ENCODE measurements at regions of chr3 and their contacts with region 1.

Region 1: GRCh38 chr3:148379763-148380382 is 317.8 kb upstream of the AGTR1 start:
- DNase-seq: peak in 1 of 2 experiments; percentile 53
- H3K4me3 ChIP-seq: no peak overlapping the region
- H3K4me3 Mint-ChIP-seq: no peak overlapping the region
- H3K27ac Mint-ChIP-seq: no peak overlapping the region
- H3K4me1 ChIP-seq: no peaks in the 10 kb centered on the region
- H3K4me1 Mint-ChIP-seq: no peaks in the 10 kb centered on the region
- H3K27me3 ChIP-seq: no peaks in the 10 kb centered on the region
- H3K27me3 Mint-ChIP-seq: no peaks in the 10 kb centered on the region
- CTCF ChIP-seq: peak; percentile 57 to 58

Region 2: DNA sequence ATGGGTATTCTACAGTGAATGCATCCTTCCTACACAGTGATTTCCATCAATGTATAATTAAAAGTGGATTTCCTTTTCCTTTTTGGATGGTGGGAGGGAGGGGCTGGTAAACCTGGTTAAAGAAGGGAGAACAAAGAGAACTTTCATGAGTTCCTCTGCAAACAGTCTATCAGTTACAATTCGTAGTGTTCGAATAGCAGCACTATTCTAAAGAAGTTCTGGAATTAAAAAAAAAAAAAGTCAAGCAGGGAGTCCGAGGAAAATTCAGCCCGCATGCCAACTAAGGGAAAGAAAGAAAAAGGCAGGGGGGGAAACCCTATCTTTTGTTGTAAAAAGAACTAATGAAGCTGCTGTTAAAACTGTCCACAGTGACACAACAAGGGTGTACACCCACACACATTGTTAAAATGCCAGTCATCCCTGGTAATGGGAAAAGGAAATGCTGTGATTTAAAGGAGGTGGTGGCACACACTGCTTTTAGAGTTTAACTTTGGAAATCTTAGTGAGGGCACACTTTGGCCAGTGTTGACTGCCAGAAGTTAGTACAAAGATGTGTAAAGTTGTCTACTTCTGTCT is 449.6 kb before region 1 on chr3:
- CTCF ChIA-PET with region 1: no interaction called
- POLR2A ChIA-PET with region 1: no interaction called
- intact Hi-C with region 1: no loop called
- DNase-seq: no peak
- H3K4me3 ChIP-seq: no peak overlapping the region
- H3K4me3 Mint-ChIP-seq: no peak overlapping the region
- H3K27ac Mint-ChIP-seq: no peak overlapping the region
- H3K4me1 ChIP-seq: no peaks in the 10 kb centered on the region
- H3K4me1 Mint-ChIP-seq: no peaks in the 10 kb centered on the region
- H3K27me3 ChIP-seq: no peaks in the 10 kb centered on the region
- H3K27me3 Mint-ChIP-seq: no peaks in the 10 kb centered on the region
- CTCF ChIP-seq: no peak

Region 3: GRCh38 chr3:148459931-148460513 is 80.1 kb after region 1 on chr3:
- CTCF ChIA-PET with region 1: no interaction called
- POLR2A ChIA-PET with region 1: no interaction called
- intact Hi-C with region 1: loop called (anchors 1 kb)
- DNase-seq: no peak
- H3K4me3 ChIP-seq: no peak overlapping the region
- H3K4me3 Mint-ChIP-seq: no peak overlapping the region
- H3K27ac Mint-ChIP-seq: no peak overlapping the region
- H3K4me1 ChIP-seq: no peaks in the 10 kb centered on the region
- H3K4me1 Mint-ChIP-seq: no peaks in the 10 kb centered on the region
- H3K27me3 ChIP-seq: no peaks in the 10 kb centered on the region
- H3K27me3 Mint-ChIP-seq: no peaks in the 10 kb centered on the region
- CTCF ChIP-seq: peak in 1 of 2 experiments; percentile 41

Region 4: GRCh38 chr3:148648685-148649352 is 268.9 kb after region 1 on chr3:
- CTCF ChIA-PET with region 1: no interaction called
- POLR2A ChIA-PET with region 1: no interaction called
- intact Hi-C with region 1: no loop called
- DNase-seq: no peak
- H3K4me3 ChIP-seq: no peak overlapping the region
- H3K4me3 Mint-ChIP-seq: no peak overlapping the region
- H3K27ac Mint-ChIP-seq: no peak overlapping the region
- H3K4me1 ChIP-seq: no peaks in the 10 kb centered on the region
- H3K4me1 Mint-ChIP-seq: no peaks in the 10 kb centered on the region
- H3K27me3 ChIP-seq: no peaks in the 10 kb centered on the region
- H3K27me3 Mint-ChIP-seq: no peaks in the 10 kb centered on the region
- CTCF ChIP-seq: no peak

Region 5: DNA sequence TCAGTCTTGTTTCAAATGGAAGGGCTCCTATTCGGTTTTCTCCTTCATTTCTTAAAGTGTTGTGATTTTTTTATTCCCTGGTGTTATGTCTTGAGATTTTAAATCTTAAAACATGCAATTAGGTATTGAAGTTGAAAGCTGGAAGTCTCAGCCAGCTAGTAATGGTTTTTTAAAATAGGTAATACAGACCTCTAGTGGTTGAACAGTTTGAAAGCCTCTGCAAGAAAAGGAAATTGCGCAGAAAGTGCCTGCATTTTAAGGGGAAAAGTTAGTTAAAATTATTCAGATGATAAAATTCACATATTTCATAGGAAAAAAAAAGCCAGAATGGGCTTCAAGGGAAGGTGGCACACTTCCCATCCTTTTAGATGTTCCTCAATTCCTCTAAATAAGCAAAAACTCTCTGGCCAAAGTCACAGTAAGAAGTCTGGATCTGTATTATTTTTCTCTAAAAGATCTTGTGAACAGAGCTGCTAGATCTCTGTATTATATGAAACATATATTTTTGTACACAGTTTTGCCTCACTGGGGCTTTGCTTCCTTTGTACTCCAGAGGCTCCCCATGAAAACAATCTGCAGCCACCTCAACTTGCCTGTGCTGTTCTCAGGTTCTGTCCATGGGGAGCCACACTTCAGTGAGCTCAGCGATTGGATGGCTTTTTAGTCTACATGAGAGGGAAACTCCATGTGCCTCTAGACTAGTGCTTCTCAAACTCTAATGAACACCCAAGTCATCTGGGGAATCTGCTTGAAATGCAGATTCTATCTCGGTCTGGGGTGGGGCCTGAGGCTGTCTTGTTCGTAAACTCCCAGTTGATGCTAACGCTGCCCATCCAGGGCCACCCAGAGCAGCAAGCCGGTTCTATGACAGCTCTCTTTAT is 339.3 kb after region 1 on chr3:
- CTCF ChIA-PET with region 1: interaction called, 24 read pairs
- POLR2A ChIA-PET with region 1: no interaction called
- intact Hi-C with region 1: loop called (anchors 1 kb)
- DNase-seq: no peak
- H3K4me3 ChIP-seq: no peak overlapping the region
- H3K4me3 Mint-ChIP-seq: no peak overlapping the region
- H3K27ac Mint-ChIP-seq: no peak overlapping the region
- H3K4me1 ChIP-seq: no peaks in the 10 kb centered on the region
- H3K4me1 Mint-ChIP-seq: no peaks in the 10 kb centered on the region
- H3K27me3 ChIP-seq: no peaks in the 10 kb centered on the region
- H3K27me3 Mint-ChIP-seq: no peaks in the 10 kb centered on the region
- CTCF ChIP-seq: peak; percentile 36 to 62

Region 6: DNA sequence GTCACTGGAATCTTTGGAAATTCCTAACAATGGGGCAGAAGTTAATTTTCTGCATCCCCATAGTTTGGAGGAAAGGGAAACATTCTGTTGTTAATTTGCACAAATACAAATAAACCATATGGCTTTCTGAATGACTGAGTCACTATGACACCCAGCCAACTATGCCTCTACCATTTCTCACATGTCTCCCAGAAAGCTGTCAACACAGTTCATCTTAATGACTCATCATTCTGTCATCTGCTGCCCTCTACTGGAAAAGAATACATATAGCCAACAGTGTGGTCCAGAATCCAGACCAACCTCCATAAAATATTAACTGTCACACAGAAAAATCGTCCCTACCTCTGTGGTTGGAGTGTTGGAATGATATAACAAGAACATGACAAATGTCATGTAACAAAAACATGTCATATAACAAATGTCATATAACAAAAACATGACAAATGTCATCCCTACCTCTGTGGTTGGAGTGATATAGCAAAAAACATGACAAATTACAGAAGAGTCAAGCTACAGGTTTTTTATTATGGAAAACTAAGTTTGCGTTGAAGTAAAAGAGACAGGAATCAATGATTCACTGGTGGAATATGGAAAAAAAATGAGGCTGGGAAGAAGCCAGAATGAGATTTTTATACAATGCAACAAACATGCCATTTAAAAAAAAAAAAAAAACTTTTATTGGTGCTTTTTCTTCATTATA is 563.8 kb after region 1 on chr3:
- CTCF ChIA-PET with region 1: no interaction called
- POLR2A ChIA-PET with region 1: no interaction called
- intact Hi-C with region 1: loop called (anchors 1 kb)
- DNase-seq: peak in 1 of 2 experiments; percentile 61
- H3K4me3 ChIP-seq: no peak overlapping the region
- H3K4me3 Mint-ChIP-seq: no peak overlapping the region
- H3K27ac Mint-ChIP-seq: no peak overlapping the region
- H3K4me1 ChIP-seq: no peaks in the 10 kb centered on the region
- H3K4me1 Mint-ChIP-seq: no peaks in the 10 kb centered on the region
- H3K27me3 ChIP-seq: no peaks in the 10 kb centered on the region; the same call in 1 of the 2 replicates
- H3K27me3 Mint-ChIP-seq: peaks cover 14% of the 10 kb centered on the region
- CTCF ChIP-seq: peak; percentile 55 to 69